OCI-LY7 (cell line): ENCODE measurements at regions of chr11 and their contacts with region 1.

Region 1: DNA sequence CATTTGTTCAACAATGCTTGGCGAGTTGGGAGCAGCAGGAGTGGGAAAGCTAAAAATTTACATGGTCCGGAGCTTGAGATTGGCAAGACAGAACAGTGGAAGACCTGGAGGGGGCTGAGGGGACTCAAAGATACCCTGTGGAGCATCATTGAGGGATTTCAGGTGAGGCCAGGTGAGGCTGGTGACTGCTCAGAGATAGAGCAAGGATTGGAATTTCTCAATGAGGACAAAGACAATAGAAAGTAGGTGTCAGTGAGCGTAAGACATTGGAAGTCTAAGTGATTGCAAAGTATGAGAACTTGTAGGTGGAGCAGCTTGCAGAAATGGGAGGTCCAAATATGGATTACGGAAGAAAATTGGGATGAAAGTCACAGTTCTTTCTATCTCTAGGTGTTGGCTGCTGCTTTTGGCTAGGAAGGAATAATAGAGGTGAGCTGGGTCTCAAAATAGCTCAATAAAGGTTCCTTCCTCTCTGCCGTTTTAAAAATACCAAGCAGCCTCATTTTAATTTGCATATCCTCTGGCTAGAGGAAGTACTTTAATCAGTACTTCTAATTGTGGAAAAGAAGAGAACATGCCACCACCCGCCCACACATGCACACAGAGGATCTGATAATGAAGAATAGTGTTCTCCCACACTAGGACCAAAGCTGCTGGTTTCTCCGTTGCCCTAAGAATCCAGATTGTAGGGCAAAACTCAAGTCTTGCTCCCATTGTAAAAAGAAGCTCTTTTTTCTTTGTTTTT is 41.8 kb upstream of the SORL1-AS1 start:
- DNase-seq: peak; percentile 78
- H3K4me3 ChIP-seq: peak overlapping the region; percentile 59
- H3K27ac ChIP-seq: peak overlapping the region; percentile 83
- H3K4me1 ChIP-seq: peaks cover 60% of the 10 kb centered on the region
- CTCF ChIP-seq: no peak

Region 2: DNA sequence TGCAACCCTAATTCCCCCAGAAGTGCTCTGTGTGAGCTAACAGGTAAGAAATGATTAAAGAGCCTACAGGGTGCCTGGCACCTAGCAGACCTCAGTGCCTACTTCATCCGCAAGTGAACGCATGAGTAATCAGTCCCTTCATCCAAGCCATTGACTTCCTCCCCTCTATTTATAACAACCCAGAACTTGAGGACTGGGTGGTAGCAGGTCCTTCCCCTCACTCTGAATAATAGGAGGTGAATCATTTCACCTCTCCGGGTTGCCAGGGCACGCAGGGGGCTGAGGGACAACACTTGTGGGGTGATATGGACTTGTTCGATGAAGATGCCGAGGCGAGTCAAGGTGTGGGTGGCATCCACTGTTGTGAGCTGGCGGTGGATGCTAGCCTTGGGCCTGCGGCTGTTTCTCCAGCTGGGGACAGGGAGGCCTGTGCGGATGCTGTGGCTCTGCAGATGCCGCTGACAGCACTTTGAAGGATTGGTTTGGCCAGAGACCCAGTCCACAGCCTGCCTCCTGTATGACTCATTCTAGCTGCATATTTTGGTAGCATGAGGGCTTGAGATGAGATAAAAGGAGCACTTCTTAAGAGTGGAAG is 30.1 kb before region 1 on chr11:
- CTCF ChIA-PET with region 1: interaction called, 3 read pairs
- POLR2A ChIA-PET with region 1: interaction called, 10 read pairs
- intact Hi-C with region 1: no loop called
- DNase-seq: peak; percentile 66
- H3K4me3 ChIP-seq: peak overlapping the region; percentile 30
- H3K27ac ChIP-seq: peak overlapping the region; percentile 70
- H3K4me1 ChIP-seq: peaks cover 99% of the 10 kb centered on the region
- CTCF ChIP-seq: no peak

Region 3: GRCh38 chr11:121482231-121483129 is 12.0 kb before region 1 on chr11:
- CTCF ChIA-PET with region 1: interaction called, 3 read pairs
- POLR2A ChIA-PET with region 1: interaction called, 22 read pairs
- intact Hi-C with region 1: no loop called
- DNase-seq: peak; percentile 75
- H3K4me3 ChIP-seq: peak overlapping the region; percentile 38
- H3K27ac ChIP-seq: peak overlapping the region; percentile 79
- H3K4me1 ChIP-seq: peaks cover 42% of the 10 kb centered on the region
- CTCF ChIP-seq: no peak

Region 4: GRCh38 chr11:121508449-121508848 is 13.9 kb after region 1 on chr11:
- CTCF ChIA-PET with region 1: interaction called, 4 read pairs
- POLR2A ChIA-PET with region 1: interaction called, 12 read pairs
- intact Hi-C with region 1: no loop called
- DNase-seq: no peak
- H3K4me3 ChIP-seq: no peak overlapping the region
- H3K27ac ChIP-seq: no peak overlapping the region
- H3K4me1 ChIP-seq: peaks cover 8% of the 10 kb centered on the region
- CTCF ChIP-seq: no peak